ENCODE measurements at regions of chr1 and their contacts with region 1.

Region 1: GRCh38 chr1:244047621-244048471 is 3.2 kb upstream of the ZBTB18 start:
- DNase-seq: peak; percentile 97
- H3K4me3 Mint-ChIP-seq: peak overlapping the region; percentile 97
- H3K27ac Mint-ChIP-seq: peak overlapping the region; percentile 95
- H3K4me1 Mint-ChIP-seq: peaks cover 28% of the 10 kb centered on the region
- H3K27me3 Mint-ChIP-seq: peaks cover 47% of the 10 kb centered on the region

Region 2: GRCh38 chr1:243343970-243344937 is 703.6 kb before region 1 on chr1:
- intact Hi-C with region 1: loop called (anchors 10 kb)
- DNase-seq: peak; percentile 66
- H3K4me3 Mint-ChIP-seq: no peak overlapping the region
- H3K27ac Mint-ChIP-seq: no peak overlapping the region
- H3K4me1 Mint-ChIP-seq: peaks cover 2% of the 10 kb centered on the region
- H3K27me3 Mint-ChIP-seq: no peaks in the 10 kb centered on the region

Region 3: GRCh38 chr1:244074559-244075171 is 26.8 kb after region 1 on chr1:
- intact Hi-C with region 1: loop called (anchors 1 kb)
- DNase-seq: peak; percentile 87
- H3K4me3 Mint-ChIP-seq: peak overlapping the region; percentile 73
- H3K27ac Mint-ChIP-seq: peak overlapping the region; percentile 67
- H3K4me1 Mint-ChIP-seq: peaks cover 20% of the 10 kb centered on the region
- H3K27me3 Mint-ChIP-seq: peaks cover 23% of the 10 kb centered on the region

Region 4: DNA sequence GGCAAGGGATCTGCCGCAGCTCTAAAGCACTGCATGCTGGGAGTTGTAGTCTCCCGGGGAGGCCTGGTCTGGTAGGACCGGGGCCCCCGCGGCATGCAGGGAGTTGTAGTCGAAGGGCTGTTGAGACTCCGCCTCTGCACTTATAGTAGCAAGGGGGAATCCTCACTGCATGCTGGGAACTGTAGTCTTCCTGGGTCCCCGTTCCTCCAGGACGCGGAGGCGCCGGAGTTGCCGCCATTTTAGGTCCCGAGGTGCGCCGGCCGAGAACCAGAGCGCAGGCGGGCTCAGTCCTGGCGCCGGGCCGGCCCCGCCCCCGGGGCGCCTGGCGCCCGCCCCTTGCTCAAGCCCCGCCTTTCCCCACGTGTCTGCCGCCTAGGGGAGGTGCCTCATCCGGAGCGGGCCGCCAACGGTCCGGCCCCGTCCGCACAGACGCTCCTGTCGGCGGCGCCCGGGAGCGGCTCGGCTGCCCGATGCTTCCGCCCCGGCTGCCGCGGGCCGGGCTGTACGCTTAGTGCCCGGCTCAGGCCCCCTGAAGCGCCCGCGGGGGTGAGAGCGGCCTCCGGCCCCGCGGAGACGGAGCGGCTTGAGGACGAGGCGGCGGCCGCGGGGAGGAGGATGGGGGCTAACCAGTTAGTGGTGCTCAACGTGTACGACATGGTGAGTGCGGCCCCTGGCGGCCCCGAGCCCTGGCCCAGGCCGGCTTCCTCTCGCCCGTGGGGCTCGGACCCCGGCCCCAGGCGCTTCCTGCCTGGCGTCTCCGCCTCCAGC is 605.0 kb after region 1 on chr1 and contains the start of gene DESI2:
- intact Hi-C with region 1: loop called (anchors 2 kb)
- DNase-seq: peak; percentile 99
- H3K4me3 Mint-ChIP-seq: peak within 1 kb of the TSS; percentile 82
- H3K27ac Mint-ChIP-seq: peak within 1 kb of the TSS; percentile 84
- H3K4me1 Mint-ChIP-seq: peaks cover 23% of the 10 kb centered on the region
- H3K27me3 Mint-ChIP-seq: no peaks in the 10 kb centered on the region
- total RNA-seq, gene DESI2: 32.3 and 33.1 TPM in 2 replicates

Region 5: DNA sequence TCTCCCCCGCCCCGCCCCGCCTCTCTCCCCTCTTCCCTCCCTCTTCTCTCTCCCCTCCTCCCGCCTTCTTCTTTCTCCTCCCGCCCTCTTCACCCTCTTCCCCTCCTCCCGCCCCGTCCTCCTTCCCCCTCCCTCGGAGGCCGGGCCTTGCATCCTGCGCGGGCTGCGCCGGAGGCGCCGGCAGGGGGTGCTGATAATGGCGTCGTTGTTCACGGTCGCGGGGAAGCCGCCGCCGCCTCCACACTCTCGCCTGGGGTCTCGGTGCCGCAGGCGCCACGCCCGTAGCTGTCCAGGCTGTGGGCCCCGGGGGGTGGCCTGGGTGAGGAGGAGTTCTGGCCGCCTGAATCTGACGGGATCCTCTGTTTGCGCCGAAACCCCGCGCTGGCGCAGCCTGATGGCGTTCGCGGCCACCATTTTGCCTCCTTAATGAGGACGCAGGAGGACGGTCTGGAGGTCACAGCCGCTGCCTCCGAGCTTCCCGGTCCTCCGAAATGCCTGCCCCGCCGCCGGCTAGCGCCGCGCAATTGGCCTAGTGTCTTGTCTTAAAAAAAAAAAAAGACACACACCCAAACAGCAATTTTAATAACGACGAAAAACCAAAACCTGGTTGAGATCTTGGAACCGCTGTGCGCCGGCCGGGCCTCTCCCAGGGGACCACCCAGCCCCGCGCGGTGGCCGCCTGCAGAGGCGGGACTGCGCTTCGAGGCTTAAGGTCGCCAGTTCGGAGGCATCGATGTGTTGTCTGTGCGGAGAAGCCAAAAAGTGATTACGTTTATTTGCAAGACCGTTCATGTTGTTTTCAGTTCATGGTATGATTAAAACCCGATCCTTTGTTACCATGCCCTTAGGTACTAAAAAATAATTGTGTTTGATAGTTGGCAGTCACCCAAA is 923.1 kb after region 1 on chr1:
- intact Hi-C with region 1: loop called (anchors 5 kb)
- DNase-seq: peak; percentile 97
- H3K4me3 Mint-ChIP-seq: peak overlapping the region; percentile 94
- H3K27ac Mint-ChIP-seq: peak overlapping the region; percentile 99
- H3K4me1 Mint-ChIP-seq: peaks cover 17% of the 10 kb centered on the region
- H3K27me3 Mint-ChIP-seq: peaks cover 3% of the 10 kb centered on the region